Left colon (tissue), 2 donors: ENCODE measurements at regions of chr1 and their contacts with region 1.

Region 1: DNA sequence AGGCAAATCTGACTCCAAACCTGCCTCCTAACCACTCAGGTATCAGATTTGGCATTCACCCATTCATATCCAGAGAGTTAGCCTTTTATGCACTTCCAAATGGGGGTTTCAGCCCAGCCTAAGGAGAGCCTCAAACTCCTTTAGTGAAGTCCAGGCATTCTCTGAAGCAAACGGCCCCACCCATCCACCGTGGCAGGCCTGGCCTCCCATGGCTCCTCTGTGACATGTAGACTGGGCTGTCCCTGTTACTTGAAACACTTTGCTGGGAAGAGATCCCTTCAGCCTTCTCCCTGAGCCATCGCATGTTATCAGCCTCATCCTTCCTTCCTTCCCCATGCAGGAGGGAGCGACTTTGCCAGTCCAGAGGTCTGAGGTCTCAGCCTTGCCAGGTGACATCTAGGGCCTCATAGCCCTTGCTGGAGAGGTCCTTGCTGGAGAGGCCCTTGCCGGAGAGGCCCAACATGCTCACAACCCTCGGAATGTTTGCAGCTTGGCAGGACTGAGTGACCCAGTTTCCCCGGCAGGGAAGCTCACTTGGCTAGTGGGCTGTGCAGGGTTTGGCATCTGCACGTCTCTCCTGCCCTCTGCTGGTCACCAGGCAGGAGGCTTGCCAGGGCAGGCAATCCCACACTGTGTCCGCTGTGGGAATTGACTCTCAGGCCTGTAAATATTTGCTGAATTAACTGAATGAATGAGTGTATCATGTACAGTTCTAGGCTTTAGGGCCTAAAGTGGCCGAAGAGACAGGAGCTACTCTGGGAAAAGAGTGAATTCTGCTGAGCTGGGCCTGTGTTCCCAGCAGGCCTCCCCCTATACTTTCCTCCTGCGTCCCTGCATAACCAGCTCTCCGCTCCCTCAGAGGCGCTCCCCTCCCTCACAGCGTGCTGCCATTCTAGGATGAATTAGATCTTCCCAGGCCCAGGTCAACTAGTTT is 26.7 kb upstream of the RBM15 start:
- DNase-seq: peak; percentile 71 to 83
- ATAC-seq: peak; percentile 97

Region 2: DNA sequence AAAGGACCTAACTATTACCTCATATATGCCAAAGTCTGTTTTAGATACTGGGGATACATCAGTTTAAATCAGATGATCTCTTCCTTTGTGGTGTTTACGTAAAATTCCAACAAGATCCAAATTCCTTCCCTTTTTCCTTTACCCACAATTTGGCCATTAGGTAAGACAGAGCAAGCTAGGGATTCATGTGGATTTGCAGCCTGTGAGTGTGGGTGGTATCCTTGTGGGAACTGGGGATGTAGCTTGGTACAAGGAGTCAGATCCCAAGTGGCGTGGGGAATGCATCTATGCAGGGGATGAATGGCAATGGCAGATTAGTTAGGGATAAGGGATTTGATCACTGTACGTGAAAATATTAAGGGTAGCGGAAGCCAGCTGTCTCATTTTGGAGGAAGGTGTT is 287.8 kb before region 1 on chr1:
- intact Hi-C with region 1: no loop called
- DNase-seq: no peak
- ATAC-seq: no peak

Region 3: GRCh38 chr1:110209715-110210603 is 102.5 kb before region 1 on chr1 and contains the start of gene KCNC4:
- intact Hi-C with region 1: loop called (anchors 2 to 5 kb)
- DNase-seq: peak; percentile 92 to 93
- ATAC-seq: peak; percentile 86
- total RNA-seq, gene KCNC4: 7.0 to 8.1 TPM

Region 4: DNA sequence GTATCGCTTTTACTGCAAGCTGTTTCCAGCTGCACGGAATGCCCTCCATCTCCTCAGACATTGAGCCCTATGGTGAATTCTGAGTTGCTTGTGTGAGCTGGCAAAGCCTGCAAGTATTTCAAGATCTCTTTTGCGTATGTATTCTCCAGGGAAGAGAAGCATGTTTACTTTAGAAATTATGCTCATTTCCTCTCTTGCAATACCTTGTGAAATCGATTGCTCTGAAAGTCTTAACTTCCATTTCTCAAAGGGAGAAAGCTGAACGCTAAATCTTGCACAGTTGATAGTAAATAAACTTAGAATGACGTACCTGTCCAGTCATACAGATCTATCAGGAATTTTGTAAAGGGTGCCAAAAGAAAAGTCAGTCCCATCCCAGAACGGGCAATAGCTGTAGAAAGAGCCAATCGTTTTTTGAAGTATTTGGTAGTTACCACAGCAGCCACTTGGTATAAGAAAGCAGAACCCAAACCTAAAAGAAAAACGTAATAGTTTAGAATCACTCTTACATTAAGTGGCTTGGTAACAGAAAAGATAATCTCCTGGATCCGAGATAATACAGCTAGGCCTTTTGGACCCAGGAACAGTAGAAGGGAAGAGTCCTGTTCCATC is 68.3 kb after region 1 on chr1:
- intact Hi-C with region 1: no loop called
- DNase-seq: no peak
- ATAC-seq: no peak

Region 5: DNA sequence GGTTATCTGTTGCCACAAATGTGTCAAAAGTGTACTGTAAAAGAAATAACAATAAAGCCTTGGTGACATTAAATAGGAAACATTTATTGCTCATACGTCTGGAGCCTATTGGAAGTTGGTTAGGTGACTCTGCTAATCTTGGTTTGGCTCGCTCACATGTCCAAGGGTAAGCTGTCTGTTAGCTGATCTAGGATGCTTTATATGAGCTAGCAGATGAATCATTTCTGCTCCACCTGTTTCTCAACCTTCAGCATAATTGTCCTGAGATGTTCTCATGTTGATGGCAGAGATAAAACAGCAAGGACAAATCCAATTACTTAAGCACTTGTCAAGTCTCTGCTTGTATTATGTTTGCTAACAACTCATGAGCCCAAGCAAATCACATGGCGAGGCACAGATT is 504.5 kb after region 1 on chr1:
- intact Hi-C with region 1: no loop called
- DNase-seq: no peak
- ATAC-seq: no peak